SK-N-SH (cell line): ENCODE measurements at regions of chr7 and their contacts with region 1.

Region 1: DNA sequence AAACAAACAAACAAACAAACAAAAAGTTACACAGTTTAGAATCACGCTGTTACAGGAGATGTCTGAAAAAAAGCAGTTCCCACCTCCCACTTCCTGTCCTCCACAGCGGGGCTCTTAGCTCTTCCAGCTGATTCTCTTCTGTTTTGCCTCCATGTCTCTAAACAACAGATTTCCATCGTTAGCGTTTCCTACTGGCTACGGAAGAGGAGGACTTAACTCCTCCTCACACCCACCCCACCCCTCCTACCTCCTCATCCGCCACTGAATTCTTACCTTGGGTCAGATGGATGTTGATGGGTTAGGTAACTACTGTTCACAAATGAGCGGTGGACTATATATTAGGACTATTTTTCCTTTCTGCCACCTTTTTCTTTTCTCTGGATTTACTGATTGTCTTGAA is 36.8 kb upstream of the NUB1 start:
- DNase-seq: no peak
- H3K4me3 ChIP-seq: no peak overlapping the region
- H3K27ac ChIP-seq: no peak overlapping the region
- H3K4me1 ChIP-seq: peaks cover 0 to 3% of the 10 kb centered on the region in 2 experiments; a peak in 1 of 4 replicates
- H3K27me3 ChIP-seq: peaks cover 38% of the 10 kb centered on the region
- CTCF ChIP-seq: no peak
- EP300 ChIP-seq: no peak
- RAD21 ChIP-seq: no peak

Region 2: DNA sequence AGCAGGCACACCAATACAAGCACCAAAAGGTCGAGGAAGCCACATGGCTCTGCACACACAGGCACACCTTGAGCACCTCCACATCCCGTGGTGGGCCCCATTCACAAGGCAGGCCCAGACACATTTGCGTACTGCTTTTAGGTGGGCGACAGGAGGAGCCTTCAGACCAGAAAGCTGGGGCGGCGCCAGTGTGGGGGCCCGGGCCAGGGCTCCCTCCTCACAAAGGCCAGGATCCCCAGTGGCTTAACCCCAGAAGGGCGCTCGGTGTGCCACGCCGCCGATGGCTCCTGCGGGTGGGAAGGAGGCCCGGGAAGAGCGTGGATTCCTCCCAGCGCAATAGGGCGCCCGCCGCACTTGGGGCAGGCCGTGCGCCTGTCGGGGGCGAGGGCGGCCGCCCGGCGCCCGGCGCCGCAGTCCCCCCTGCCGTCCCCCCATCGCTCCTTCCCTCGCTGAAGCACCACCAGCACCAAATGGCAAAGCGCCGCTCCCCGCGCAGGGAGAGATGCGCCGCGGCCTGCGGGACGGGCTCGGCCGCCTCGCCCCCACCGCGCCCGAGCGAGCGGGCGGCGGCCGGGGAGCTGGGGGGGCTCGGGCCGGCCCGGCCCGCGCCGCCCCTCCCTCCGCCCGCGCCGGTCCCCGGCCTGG is 53.4 kb before region 1 on chr7:
- CTCF ChIA-PET with region 1: interaction called, 13 read pairs
- POLR2A ChIA-PET with region 1: no interaction called
- DNase-seq: peak; percentile 97
- H3K4me3 ChIP-seq: peak overlapping the region; percentile 56 to 87
- H3K27ac ChIP-seq: peak overlapping the region; percentile 64 to 81
- H3K4me1 ChIP-seq: peaks cover 35 to 48% of the 10 kb centered on the region in 2 experiments; a peak in 3 of 4 replicates
- H3K27me3 ChIP-seq: no peaks in the 10 kb centered on the region
- CTCF ChIP-seq: 0 out of 2 replicates have a peak, but pooled peaks have one; percentile 11
- EP300 ChIP-seq: no peak
- RAD21 ChIP-seq: no peak

Region 3: DNA sequence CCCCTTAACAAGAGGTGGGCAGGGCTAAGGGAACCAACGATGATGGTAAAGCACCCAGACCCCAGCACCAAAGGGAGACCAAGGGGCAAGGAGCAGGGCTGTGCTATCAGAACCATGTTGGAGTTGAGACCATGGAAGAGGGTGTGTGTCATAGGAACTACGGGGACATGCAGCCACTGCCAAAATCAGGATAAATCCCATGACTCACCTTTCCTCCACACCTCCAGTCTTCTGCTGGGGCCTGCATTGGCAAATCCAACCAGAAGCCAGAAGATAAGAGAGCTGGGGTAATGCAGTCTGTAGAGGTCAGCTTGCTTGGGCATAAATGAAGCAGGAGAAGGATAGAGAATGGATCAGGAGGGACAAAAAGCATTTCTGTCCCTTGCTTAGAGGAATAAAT is 13.7 kb before region 1 on chr7:
- CTCF ChIA-PET with region 1: interaction called, 12 read pairs
- POLR2A ChIA-PET with region 1: no interaction called
- DNase-seq: no peak
- H3K4me3 ChIP-seq: no peak overlapping the region
- H3K27ac ChIP-seq: no peak overlapping the region
- H3K4me1 ChIP-seq: no peaks in the 10 kb centered on the region
- H3K27me3 ChIP-seq: peaks cover 39% of the 10 kb centered on the region; the same call in 1 of the 2 replicates
- CTCF ChIP-seq: no peak
- EP300 ChIP-seq: no peak
- RAD21 ChIP-seq: no peak

Region 4: GRCh38 chr7:151327659-151328058 is 22.8 kb after region 1 on chr7:
- CTCF ChIA-PET with region 1: interaction called, 53 read pairs
- POLR2A ChIA-PET with region 1: no interaction called
- DNase-seq: no peak
- H3K4me3 ChIP-seq: no peak overlapping the region
- H3K27ac ChIP-seq: no peak overlapping the region
- H3K4me1 ChIP-seq: no peaks in the 10 kb centered on the region; a peak in 1 of 4 replicates
- H3K27me3 ChIP-seq: no peaks in the 10 kb centered on the region; the same call in 1 of the 2 replicates
- CTCF ChIP-seq: no peak
- EP300 ChIP-seq: no peak
- RAD21 ChIP-seq: no peak